Endothelial cell of umbilical vein (primary cell): ENCODE measurements at regions of chr4 and their contacts with region 1.

Region 1: GRCh38 chr4:76179398-76180318 is 31.5 kb upstream of the NUP54 start:
- DNase-seq: peak; percentile 78
- H3K4me3 ChIP-seq: no peak overlapping the region
- H3K27ac ChIP-seq: no peak overlapping the region
- H3K4me1 ChIP-seq: peaks cover 4% of the 10 kb centered on the region
- H3K27me3 ChIP-seq: no peaks in the 10 kb centered on the region
- CTCF ChIP-seq: peak; percentile 85 to 86
- POLR2A ChIP-seq: no peak

Region 2: GRCh38 chr4:76168688-76169087 is 11.0 kb before region 1 on chr4:
- CTCF ChIA-PET with region 1: interaction called, 26 read pairs
- POLR2A ChIA-PET with region 1: no interaction called
- dilution Hi-C with region 1: no loop called
- intact Hi-C with region 1: no loop called
- DNase-seq: no peak
- H3K4me3 ChIP-seq: no peak overlapping the region
- H3K27ac ChIP-seq: no peak overlapping the region
- H3K4me1 ChIP-seq: no peaks in the 10 kb centered on the region
- H3K27me3 ChIP-seq: no peaks in the 10 kb centered on the region
- CTCF ChIP-seq: no peak
- POLR2A ChIP-seq: no peak

Region 3: GRCh38 chr4:76208005-76208765 is 28.5 kb after region 1 on chr4:
- CTCF ChIA-PET with region 1: interaction called, 89 read pairs
- POLR2A ChIA-PET with region 1: no interaction called
- dilution Hi-C with region 1: no loop called
- intact Hi-C with region 1: loop called (anchors 1 kb)
- DNase-seq: peak; percentile 97
- H3K4me3 ChIP-seq: peak overlapping the region in 2 of 3 experiments; percentile 9 to 54
- H3K27ac ChIP-seq: peak overlapping the region; percentile 88
- H3K4me1 ChIP-seq: peaks cover 37% of the 10 kb centered on the region
- H3K27me3 ChIP-seq: no peaks in the 10 kb centered on the region
- CTCF ChIP-seq: no peak
- POLR2A ChIP-seq: peak; percentile 74

Region 4: DNA sequence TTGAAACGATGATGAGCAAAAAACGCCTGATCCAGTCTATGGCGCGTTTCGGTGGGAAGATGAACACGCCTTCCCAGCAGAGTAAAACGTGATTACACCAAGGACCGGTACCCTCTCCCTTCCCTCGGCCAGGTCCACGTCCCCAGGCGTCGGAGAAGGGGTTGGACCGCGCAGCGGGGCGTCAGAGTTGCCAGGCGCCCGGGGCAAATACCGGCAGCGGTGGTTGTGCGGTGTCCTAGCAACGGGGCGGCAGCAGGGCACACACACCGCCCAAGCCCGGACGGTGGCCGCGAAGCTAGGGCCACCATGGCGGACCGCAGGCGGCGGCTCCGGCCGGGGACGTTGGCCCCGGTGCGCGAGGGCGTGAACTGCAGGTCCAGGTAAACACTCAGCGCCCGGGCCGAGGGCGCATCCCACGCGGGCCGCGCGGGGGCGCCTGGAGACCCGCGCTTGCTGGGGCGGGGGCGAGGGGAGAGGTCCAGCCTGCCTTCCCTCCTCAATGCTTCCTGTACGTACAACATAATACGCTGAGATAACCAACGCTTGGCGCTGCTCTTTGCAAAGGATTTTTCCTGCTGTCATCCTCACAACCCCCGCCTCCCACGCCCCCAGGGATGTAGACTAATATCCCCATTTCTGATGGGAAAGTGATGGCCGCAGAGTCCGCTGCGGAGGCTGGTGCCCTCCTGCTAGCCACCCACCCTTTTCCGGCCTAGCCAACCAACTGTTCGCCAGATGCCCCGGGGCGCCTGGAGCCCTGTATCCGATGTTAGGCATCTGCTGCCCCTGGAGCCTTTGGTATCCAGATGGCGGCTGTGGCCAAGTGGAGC is 72.0 kb after region 1 on chr4 and contains the start of gene FAM47E:
- CTCF ChIA-PET with region 1: interaction called, 17 read pairs
- POLR2A ChIA-PET with region 1: no interaction called
- dilution Hi-C with region 1: no loop called
- intact Hi-C with region 1: no loop called
- DNase-seq: peak; percentile 44
- H3K4me3 ChIP-seq: peak within 1 kb of the TSS in 2 of 3 experiments; percentile 1 to 28
- H3K27ac ChIP-seq: no peak within 1 kb of the TSS
- H3K4me1 ChIP-seq: peaks cover 3% of the 10 kb centered on the region
- H3K27me3 ChIP-seq: peaks cover 50 to 70% of the 10 kb centered on the region in 2 experiments
- CTCF ChIP-seq: peak; percentile 17 to 44
- POLR2A ChIP-seq: no peak
- total RNA-seq, gene FAM47E: 0.11 TPM in 1 of 2 replicates, not detected in the other

Region 5: GRCh38 chr4:76279472-76279871 is 99.8 kb after region 1 on chr4:
- CTCF ChIA-PET with region 1: interaction called, 16 read pairs
- POLR2A ChIA-PET with region 1: no interaction called
- dilution Hi-C with region 1: no loop called
- intact Hi-C with region 1: no loop called
- DNase-seq: no peak
- H3K4me3 ChIP-seq: no peak overlapping the region
- H3K27ac ChIP-seq: no peak overlapping the region
- H3K4me1 ChIP-seq: no peaks in the 10 kb centered on the region
- H3K27me3 ChIP-seq: peaks cover 3 to 11% of the 10 kb centered on the region in 2 experiments
- CTCF ChIP-seq: no peak
- POLR2A ChIP-seq: no peak

Region 6: GRCh38 chr4:76377911-76378310 is 198.3 kb after region 1 on chr4:
- CTCF ChIA-PET with region 1: interaction called, 310 read pairs
- POLR2A ChIA-PET with region 1: no interaction called
- dilution Hi-C with region 1: no loop called
- intact Hi-C with region 1: loop called (anchors 1 kb)
- DNase-seq: peak; percentile 38
- H3K4me3 ChIP-seq: no peak overlapping the region
- H3K27ac ChIP-seq: no peak overlapping the region
- H3K4me1 ChIP-seq: peaks cover 20% of the 10 kb centered on the region
- H3K27me3 ChIP-seq: peaks cover 0 to 2% of the 10 kb centered on the region in 2 experiments
- CTCF ChIP-seq: peak; percentile 53 to 71
- POLR2A ChIP-seq: no peak

Region 7: GRCh38 chr4:76459291-76459723 is 279.6 kb after region 1 on chr4:
- CTCF ChIA-PET with region 1: no interaction called
- POLR2A ChIA-PET with region 1: no interaction called
- dilution Hi-C with region 1: no loop called
- intact Hi-C with region 1: no loop called
- DNase-seq: peak; percentile 24
- H3K4me3 ChIP-seq: no peak overlapping the region
- H3K27ac ChIP-seq: no peak overlapping the region
- H3K4me1 ChIP-seq: no peaks in the 10 kb centered on the region
- H3K27me3 ChIP-seq: peaks cover 0 to 2% of the 10 kb centered on the region in 2 experiments
- CTCF ChIP-seq: no peak
- POLR2A ChIP-seq: no peak

Region 8: GRCh38 chr4:76499461-76499860 is 319.8 kb after region 1 on chr4:
- CTCF ChIA-PET with region 1: interaction called, 35 read pairs
- POLR2A ChIA-PET with region 1: no interaction called
- dilution Hi-C with region 1: no loop called
- intact Hi-C with region 1: loop called (anchors 2 kb)
- DNase-seq: no peak
- H3K4me3 ChIP-seq: no peak overlapping the region
- H3K27ac ChIP-seq: no peak overlapping the region
- H3K4me1 ChIP-seq: no peaks in the 10 kb centered on the region
- H3K27me3 ChIP-seq: peaks cover 37 to 43% of the 10 kb centered on the region in 2 experiments
- CTCF ChIP-seq: no peak
- POLR2A ChIP-seq: no peak